Activated CD4-positive, alpha-beta memory T cell treated with anti-CD3 and anti-CD28 coated beads, Interleukin-2, amount 10 ng/mL, durations not matched to agents 7 days and 5 days (primary cell): ENCODE measurements at regions of chr9 and their contacts with region 1.

Region 1: DNA sequence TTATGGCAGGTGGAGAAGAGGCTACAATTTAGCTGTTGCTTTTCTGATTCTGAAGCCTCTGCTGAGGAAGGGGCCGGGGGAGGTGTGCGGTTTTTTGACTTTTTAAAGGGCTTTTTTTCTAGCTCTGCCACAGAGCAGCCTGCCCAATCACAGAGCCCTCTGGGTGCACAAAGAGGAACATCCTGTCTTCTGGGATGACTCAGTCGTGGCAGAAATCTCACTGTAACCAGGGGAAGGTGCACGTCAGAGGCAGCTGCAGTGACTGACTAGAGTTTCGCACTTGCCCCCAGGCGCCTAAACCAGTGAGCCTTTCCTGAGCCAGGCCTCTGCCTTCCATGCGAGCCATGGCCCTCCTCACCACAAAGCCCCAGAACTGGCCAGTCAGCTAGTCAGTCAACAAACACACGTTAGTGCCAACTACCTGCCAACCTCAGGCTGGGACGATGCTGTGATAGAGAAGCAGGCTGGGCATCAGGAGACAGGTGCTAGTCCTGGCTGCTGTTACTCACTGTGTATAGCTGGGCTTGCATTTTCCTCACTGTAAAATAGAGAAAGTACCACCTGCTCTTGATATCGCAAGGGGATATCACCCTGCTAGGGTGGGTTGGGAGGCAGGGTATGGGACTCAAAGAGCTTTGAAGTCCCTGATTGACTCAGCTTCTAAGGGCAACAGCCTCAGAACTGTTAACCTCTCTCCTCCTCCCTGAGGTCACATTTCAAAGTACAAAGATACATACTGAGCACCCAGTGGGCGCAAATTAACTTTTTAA is 2.2 kb downstream of the AKNA start:
- DNase-seq: peak; percentile 93
- H3K4me3 Mint-ChIP-seq: peak overlapping the region; percentile 100
- H3K27ac Mint-ChIP-seq: peak overlapping the region; percentile 98
- H3K4me1 Mint-ChIP-seq: peaks cover 58% of the 10 kb centered on the region
- H3K27me3 Mint-ChIP-seq: no peaks in the 10 kb centered on the region

Region 2: GRCh38 chr9:114339130-114339908 is 46.3 kb before region 1 on chr9:
- CTCF ChIA-PET with region 1: interaction called, 24 read pairs
- POLR2A ChIA-PET with region 1: interaction called, 36 read pairs
- DNase-seq: peak; percentile 60
- H3K4me3 Mint-ChIP-seq: no peak overlapping the region
- H3K27ac Mint-ChIP-seq: no peak overlapping the region
- H3K4me1 Mint-ChIP-seq: peaks cover 9% of the 10 kb centered on the region
- H3K27me3 Mint-ChIP-seq: no peaks in the 10 kb centered on the region

Region 3: DNA sequence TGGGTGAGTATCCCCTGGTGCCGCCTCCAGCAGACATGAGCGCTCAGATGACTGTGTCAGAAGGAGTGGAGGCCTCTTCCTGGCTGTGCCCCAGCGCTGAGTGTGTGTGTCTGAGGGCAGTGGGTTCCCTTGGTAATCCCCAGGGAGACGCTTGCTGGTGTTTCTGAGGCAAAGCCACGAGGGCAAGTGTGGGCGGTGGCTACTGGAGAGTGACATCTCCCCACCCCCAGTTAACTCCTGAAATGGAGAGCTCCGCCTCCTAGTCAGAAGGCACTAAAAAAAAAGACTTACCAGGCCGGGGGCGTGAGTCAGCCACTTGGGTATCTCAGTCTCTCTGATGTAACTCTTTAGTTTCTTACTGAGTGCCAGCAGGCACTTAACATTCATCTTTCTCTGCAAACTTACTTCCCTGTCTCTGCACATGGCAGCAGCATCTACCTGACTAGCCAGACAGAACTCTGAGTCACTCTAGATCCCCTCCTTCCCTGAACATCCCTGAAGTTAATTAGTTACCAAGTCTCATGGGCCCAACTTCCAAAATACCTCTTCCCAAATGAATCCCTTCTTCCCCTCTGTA is 36.6 kb before region 1 on chr9:
- CTCF ChIA-PET with region 1: interaction called, 4 read pairs
- POLR2A ChIA-PET with region 1: interaction called, 115 read pairs
- DNase-seq: peak; percentile 75
- H3K4me3 Mint-ChIP-seq: no peak overlapping the region
- H3K27ac Mint-ChIP-seq: peak overlapping the region; percentile 91
- H3K4me1 Mint-ChIP-seq: peaks cover 52% of the 10 kb centered on the region
- H3K27me3 Mint-ChIP-seq: no peaks in the 10 kb centered on the region

Region 4: DNA sequence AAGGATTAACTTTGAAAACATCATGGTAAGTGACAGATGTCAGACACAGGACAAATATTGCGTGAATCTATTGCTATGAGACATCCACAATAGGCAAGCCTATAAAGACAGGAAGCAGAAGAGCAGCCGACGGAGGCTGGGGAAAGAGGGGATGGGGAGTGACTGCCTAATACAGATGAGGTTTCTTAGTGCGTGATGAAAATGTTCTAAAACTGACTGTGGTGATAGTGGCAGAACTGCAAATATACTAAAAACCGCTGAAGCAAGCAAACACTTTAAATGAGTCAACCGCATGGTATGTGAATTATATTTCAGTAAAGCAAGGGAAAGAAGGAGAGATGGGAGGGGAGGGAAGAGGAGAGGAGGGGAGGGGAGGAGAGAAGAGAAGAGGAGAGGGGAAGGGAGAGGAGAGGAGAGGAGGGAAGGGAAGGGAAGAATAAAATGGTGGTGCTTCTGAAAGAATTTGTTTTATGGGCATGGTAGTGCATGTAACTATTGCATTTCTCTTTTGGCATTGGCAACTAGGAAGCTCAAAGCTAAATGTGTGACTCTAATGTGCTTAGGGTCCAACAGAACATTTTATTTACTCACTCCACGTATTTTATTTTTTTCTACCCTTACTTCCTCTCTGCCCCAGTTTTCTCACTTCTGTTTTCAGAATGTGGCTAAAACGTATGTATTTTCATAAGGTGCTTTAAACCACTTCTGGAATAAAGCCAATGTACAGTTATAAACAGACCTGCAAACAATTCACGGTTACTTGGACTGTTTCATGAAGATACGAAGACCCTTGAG is 19.1 kb before region 1 on chr9:
- CTCF ChIA-PET with region 1: interaction called, 87 read pairs
- POLR2A ChIA-PET with region 1: interaction called, 633 read pairs
- DNase-seq: peak; percentile 63
- H3K4me3 Mint-ChIP-seq: peak overlapping the region; percentile 49
- H3K27ac Mint-ChIP-seq: peak overlapping the region; percentile 96
- H3K4me1 Mint-ChIP-seq: peaks cover 89% of the 10 kb centered on the region
- H3K27me3 Mint-ChIP-seq: no peaks in the 10 kb centered on the region

Region 5: DNA sequence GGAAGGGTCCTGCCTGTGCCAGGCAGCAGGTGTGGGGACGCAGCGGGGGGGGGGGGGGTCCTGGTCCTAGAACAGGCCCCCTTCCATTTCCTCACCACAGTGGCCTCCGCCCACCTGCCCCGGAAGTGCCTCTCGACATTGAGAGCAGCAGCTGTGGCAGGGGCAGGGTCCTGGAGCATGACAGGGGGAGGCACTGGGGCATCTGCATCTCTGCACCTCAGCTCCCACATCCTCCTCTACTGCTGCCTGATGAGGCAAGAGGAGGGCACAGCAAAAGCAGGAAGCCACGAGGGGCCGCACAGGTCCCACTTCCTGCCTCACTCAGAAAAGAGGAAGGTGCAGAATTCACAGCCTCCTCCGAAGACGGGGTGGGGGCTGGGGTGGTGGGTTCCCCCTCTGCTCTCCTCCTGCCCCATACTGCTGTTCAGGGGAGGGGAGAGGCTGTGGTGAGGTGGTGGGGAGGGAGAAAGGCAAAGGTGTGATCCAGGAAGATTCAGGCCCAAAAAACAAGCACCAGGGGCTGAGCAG is 12.6 kb before region 1 on chr9:
- CTCF ChIA-PET with region 1: interaction called, 87 read pairs
- POLR2A ChIA-PET with region 1: interaction called, 633 read pairs
- DNase-seq: peak; percentile 92
- H3K4me3 Mint-ChIP-seq: peak overlapping the region; percentile 71
- H3K27ac Mint-ChIP-seq: peak overlapping the region; percentile 93
- H3K4me1 Mint-ChIP-seq: peaks cover 94% of the 10 kb centered on the region
- H3K27me3 Mint-ChIP-seq: no peaks in the 10 kb centered on the region

Region 6: GRCh38 chr9:114397848-114398605 is 12.4 kb after region 1 on chr9:
- CTCF ChIA-PET with region 1: interaction called, 29 read pairs
- POLR2A ChIA-PET with region 1: interaction called, 135 read pairs
- DNase-seq: peak; percentile 97
- H3K4me3 Mint-ChIP-seq: peak overlapping the region; percentile 96
- H3K27ac Mint-ChIP-seq: peak overlapping the region; percentile 70
- H3K4me1 Mint-ChIP-seq: peaks cover 42% of the 10 kb centered on the region
- H3K27me3 Mint-ChIP-seq: no peaks in the 10 kb centered on the region